CD8-positive, alpha-beta memory T cell (primary cell): ENCODE measurements at regions of chr10 and their contacts with region 1.

Region 1: GRCh38 chr10:132446661-132447194 is 49.7 kb downstream of the PWWP2B start:
- DNase-seq: peak; percentile 51 to 81 (median 64)
- H3K4me3 ChIP-seq: peak overlapping the region; percentile 53
- H3K4me3 Mint-ChIP-seq: peak overlapping the region; percentile 63 to 87 (median 68)
- H3K27ac ChIP-seq: peak overlapping the region; percentile 91
- H3K27ac Mint-ChIP-seq: peak overlapping the region; percentile 90 to 100 (median 95)
- H3K4me1 ChIP-seq: peaks cover 46% of the 10 kb centered on the region
- H3K4me1 Mint-ChIP-seq: peaks cover 23 to 63% (median 38%) of the 10 kb centered on the region in 3 donors
- H3K27me3 ChIP-seq: no peaks in the 10 kb centered on the region
- H3K27me3 Mint-ChIP-seq: no peaks in the 10 kb centered on the region

Region 2: GRCh38 chr10:132387764-132388210 is 58.9 kb before region 1 on chr10:
- CTCF ChIA-PET with region 1: interaction called, 13 read pairs
- POLR2A ChIA-PET with region 1: interaction called, 3 read pairs
- DNase-seq: peak; percentile 77 to 87 (median 77)
- H3K4me3 ChIP-seq: no peak overlapping the region
- H3K4me3 Mint-ChIP-seq: peak overlapping the region in 4 of 7 donors; percentile 45 to 57 (median 50)
- H3K27ac ChIP-seq: no peak overlapping the region
- H3K27ac Mint-ChIP-seq: peak overlapping the region in 6 of 8 donors; percentile 65 to 93 (median 84)
- H3K4me1 ChIP-seq: peaks cover 7% of the 10 kb centered on the region
- H3K4me1 Mint-ChIP-seq: peaks cover 8 to 11% (median 10%) of the 10 kb centered on the region in 3 donors
- H3K27me3 ChIP-seq: no peaks in the 10 kb centered on the region
- H3K27me3 Mint-ChIP-seq: no peaks in the 10 kb centered on the region

Region 3: DNA sequence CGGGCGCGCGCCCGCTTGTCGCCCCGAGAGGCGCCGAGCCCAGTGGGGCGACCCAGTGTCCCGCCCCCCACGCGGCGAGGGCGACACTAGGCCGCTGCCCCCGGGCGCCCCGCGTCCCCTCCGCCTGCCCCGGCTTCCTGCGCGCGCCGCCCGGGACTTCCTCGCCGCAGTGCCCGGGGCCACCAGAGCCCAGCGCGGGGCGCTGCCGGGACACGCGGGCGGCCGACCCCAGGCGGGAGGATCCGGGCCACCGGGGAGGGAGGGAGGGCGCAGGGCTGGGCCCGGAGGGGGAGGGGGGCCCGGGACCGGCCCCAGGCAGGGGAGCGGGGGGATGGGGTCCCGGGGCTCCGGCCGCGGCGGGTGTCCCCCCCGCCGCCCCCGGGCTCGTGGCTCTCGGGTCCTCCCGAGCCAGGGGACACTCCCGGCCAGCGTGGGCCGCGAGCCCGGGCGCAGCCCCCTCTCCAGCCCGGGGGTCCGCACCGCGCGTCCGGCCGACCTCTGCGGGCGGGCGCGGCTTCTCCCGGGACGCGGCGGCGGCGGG is 50.2 kb before region 1 on chr10:
- CTCF ChIA-PET with region 1: interaction called, 17 read pairs
- POLR2A ChIA-PET with region 1: interaction called, 15 read pairs
- DNase-seq: peak; percentile 58 to 80 (median 76)
- H3K4me3 ChIP-seq: no peak overlapping the region
- H3K4me3 Mint-ChIP-seq: no peak overlapping the region
- H3K27ac ChIP-seq: peak overlapping the region; percentile 43
- H3K27ac Mint-ChIP-seq: no peak overlapping the region
- H3K4me1 ChIP-seq: peaks cover 17% of the 10 kb centered on the region
- H3K4me1 Mint-ChIP-seq: peaks cover 6 to 47% (median 17%) of the 10 kb centered on the region in 3 donors
- H3K27me3 ChIP-seq: no peaks in the 10 kb centered on the region
- H3K27me3 Mint-ChIP-seq: no peaks in the 10 kb centered on the region